Activated B cell treated with CpG ODN at 0.5 μM for 24 hours (primary cell): ENCODE measurements at regions of chr1 and their contacts with region 1.

Region 1: DNA sequence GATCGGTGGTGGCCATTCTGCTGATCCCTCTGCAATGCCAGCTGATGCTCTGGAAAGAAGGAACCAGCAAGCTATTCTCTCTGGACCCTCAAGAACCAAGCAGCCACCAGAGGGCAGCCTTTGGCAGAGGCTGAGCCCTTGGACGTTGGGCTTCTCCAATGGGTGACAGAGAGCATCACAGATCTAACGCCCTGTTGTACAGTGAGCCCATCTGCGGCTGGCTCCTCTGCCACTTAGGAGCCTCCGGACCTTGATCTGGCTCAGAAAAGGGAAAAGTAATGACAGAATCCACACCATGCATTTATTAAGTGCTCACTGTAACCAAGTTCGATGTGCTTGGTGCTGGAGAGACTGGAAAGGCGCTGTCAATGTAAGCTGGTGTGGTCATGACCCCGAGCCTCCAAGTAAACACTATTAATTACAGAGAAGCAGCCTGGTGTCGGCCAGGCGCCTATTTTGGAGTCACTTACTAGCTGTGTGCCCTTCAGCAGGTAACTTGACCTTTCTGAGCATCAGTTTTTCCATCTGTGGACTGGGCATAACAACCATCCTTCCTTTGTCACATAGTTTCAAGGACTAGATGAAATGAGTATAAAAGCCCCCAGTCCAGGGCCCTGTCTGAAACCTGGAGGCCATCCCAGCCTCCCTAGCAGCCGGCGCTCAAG is 34.9 kb downstream of the ECE1 start:
- DNase-seq: peak; percentile 66
- ATAC-seq: peak; percentile 79
- H3K4me3 Mint-ChIP-seq: no peak overlapping the region
- H3K27ac Mint-ChIP-seq: peak overlapping the region; percentile 69
- H3K4me1 Mint-ChIP-seq: peaks cover 24% of the 10 kb centered on the region
- H3K27me3 Mint-ChIP-seq: no peaks in the 10 kb centered on the region
- CTCF ChIP-seq: no peak

Region 2: GRCh38 chr1:21050031-21050430 is 205.4 kb before region 1 on chr1:
- CTCF ChIA-PET with region 1: no interaction called
- POLR2A ChIA-PET with region 1: no interaction called
- intact Hi-C with region 1: no loop called
- DNase-seq: no peak
- ATAC-seq: no peak
- H3K4me3 Mint-ChIP-seq: no peak overlapping the region
- H3K27ac Mint-ChIP-seq: no peak overlapping the region
- H3K4me1 Mint-ChIP-seq: peaks cover 17% of the 10 kb centered on the region
- H3K27me3 Mint-ChIP-seq: no peaks in the 10 kb centered on the region
- CTCF ChIP-seq: no peak

Region 3: GRCh38 chr1:21200767-21201166 is 54.6 kb before region 1 on chr1:
- CTCF ChIA-PET with region 1: no interaction called
- POLR2A ChIA-PET with region 1: no interaction called
- intact Hi-C with region 1: no loop called
- DNase-seq: no peak
- ATAC-seq: no peak
- H3K4me3 Mint-ChIP-seq: no peak overlapping the region
- H3K27ac Mint-ChIP-seq: no peak overlapping the region
- H3K4me1 Mint-ChIP-seq: no peaks in the 10 kb centered on the region
- H3K27me3 Mint-ChIP-seq: peaks cover 4% of the 10 kb centered on the region
- CTCF ChIP-seq: no peak

Region 4: DNA sequence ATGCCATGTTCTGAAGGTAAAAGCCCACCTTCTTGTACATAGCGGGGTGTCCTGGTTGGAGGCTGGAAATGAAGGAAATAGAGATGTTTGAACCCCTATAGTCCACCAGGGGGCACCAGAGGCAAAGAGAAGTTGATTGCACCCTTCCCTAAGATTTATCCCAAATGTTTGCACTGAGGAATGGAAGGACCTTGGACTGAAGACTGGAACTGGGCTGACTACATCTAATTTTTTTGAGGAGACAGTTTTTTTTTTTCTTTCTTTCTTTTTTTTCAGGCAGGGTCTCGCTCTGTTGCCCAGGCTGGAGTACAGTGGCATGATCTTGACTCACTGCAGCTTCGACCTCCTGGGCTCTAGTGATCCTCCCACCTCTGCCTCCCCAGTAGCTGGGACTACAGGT is 23.4 kb before region 1 on chr1:
- CTCF ChIA-PET with region 1: interaction called, 29 read pairs
- POLR2A ChIA-PET with region 1: interaction called, 5 read pairs
- intact Hi-C with region 1: loop called (anchors 1 kb)
- DNase-seq: no peak
- ATAC-seq: peak; percentile 72
- H3K4me3 Mint-ChIP-seq: no peak overlapping the region
- H3K27ac Mint-ChIP-seq: no peak overlapping the region
- H3K4me1 Mint-ChIP-seq: no peaks in the 10 kb centered on the region
- H3K27me3 Mint-ChIP-seq: no peaks in the 10 kb centered on the region
- CTCF ChIP-seq: peak; percentile 43

Region 5: DNA sequence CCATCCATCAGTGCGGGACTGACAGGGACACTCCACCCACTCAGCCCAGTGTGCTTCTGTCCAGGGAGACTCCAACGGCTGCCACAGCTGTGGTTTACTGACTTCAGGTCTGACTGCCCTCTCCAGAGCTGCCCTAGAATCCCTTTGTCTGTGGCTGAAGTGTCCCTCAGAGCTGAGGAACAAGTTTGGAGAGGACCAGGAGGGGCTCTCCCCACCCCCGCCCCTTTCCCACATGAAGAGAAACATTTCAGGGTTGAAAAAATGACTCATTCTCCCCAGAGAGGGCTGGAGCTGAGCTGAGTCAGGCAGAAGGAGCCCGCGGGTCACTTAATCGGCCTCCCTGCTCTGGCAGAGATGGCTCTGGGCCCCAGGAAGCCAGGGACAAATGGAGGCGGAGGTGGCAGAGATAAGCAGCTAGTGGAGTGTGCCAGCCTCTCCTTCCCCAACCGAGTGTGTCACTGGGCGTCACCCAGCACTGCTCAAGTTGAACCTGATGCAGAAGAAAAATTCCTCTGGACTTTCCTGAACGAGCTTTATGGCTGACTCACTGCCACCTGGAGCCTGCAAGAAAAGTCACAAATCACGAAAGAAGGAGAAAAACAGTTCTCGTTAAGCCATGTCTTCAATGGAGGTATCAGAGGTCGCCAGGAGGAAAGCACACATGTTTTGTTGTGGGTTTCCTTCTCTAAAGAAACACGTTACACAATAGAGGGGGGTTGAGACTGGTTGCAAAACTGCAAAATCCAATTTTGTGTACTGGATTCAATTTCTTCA is 69.1 kb after region 1 on chr1:
- CTCF ChIA-PET with region 1: interaction called, 11 read pairs
- POLR2A ChIA-PET with region 1: interaction called, 3 read pairs
- intact Hi-C with region 1: no loop called
- DNase-seq: peak; percentile 51
- ATAC-seq: peak; percentile 71
- H3K4me3 Mint-ChIP-seq: peak overlapping the region; percentile 72
- H3K27ac Mint-ChIP-seq: peak overlapping the region; percentile 90
- H3K4me1 Mint-ChIP-seq: peaks cover 87% of the 10 kb centered on the region
- H3K27me3 Mint-ChIP-seq: no peaks in the 10 kb centered on the region
- CTCF ChIP-seq: no peak

Region 6: GRCh38 chr1:21344750-21345443 is 89.5 kb after region 1 on chr1:
- CTCF ChIA-PET with region 1: interaction called, 14 read pairs
- POLR2A ChIA-PET with region 1: interaction called, 14 read pairs
- intact Hi-C with region 1: no loop called
- DNase-seq: peak; percentile 36
- ATAC-seq: peak; percentile 22
- H3K4me3 Mint-ChIP-seq: peak overlapping the region; percentile 92
- H3K27ac Mint-ChIP-seq: peak overlapping the region; percentile 77
- H3K4me1 Mint-ChIP-seq: peaks cover 43% of the 10 kb centered on the region
- H3K27me3 Mint-ChIP-seq: no peaks in the 10 kb centered on the region
- CTCF ChIP-seq: no peak

Region 7: DNA sequence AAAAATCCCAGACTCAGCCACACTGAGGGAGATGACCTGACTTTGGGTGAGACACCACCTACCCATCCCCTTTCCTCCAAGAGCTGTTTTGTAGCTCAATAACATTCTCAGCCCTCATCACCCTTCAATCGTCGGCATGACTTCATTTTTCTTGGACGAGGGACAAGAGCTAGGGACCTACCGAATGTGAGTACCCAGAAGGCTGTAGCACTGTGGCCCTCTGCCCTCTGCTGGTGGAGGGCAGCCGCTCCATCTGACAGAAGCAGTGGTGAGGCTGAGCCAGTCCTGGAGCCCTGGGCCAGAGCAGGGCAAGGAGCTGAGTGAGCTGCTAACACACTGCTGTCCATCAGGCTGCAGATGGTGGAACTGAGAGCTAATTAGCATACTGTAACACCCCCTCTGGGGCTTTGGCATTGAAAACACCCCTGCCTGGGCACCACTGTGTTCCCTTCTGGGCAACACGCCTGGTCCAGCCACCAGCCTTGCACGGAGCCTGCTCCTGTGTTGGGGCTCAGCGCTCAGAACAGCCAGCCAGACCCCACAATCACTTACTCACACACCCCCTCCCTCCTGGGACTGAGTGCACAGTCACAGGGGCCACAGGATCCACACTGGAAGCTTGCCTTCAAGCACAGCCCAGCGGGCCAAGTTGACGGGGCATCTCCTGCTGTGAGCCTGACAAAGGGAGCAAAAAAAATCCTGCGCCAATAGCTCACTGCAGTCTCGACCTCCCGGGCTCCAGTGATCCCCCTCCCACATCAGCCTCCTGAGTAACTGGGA is 235.6 kb after region 1 on chr1:
- CTCF ChIA-PET with region 1: no interaction called
- POLR2A ChIA-PET with region 1: no interaction called
- intact Hi-C with region 1: loop called (anchors 10 kb)
- DNase-seq: no peak
- ATAC-seq: no peak
- H3K4me3 Mint-ChIP-seq: no peak overlapping the region
- H3K27ac Mint-ChIP-seq: no peak overlapping the region
- H3K4me1 Mint-ChIP-seq: peaks cover 13% of the 10 kb centered on the region
- H3K27me3 Mint-ChIP-seq: peaks cover 8% of the 10 kb centered on the region
- CTCF ChIP-seq: no peak

Region 8: GRCh38 chr1:21659099-21659923 is 403.9 kb after region 1 on chr1:
- CTCF ChIA-PET with region 1: interaction called, 3 read pairs
- POLR2A ChIA-PET with region 1: no interaction called
- intact Hi-C with region 1: loop called (anchors 10 kb)
- DNase-seq: peak; percentile 77
- ATAC-seq: peak; percentile 97
- H3K4me3 Mint-ChIP-seq: peak overlapping the region; percentile 32
- H3K27ac Mint-ChIP-seq: no peak overlapping the region
- H3K4me1 Mint-ChIP-seq: peaks cover 11% of the 10 kb centered on the region
- H3K27me3 Mint-ChIP-seq: peaks cover 25% of the 10 kb centered on the region
- CTCF ChIP-seq: no peak